ENCODE measurements at regions of chr5 and their contacts with region 1.

Region 1: DNA sequence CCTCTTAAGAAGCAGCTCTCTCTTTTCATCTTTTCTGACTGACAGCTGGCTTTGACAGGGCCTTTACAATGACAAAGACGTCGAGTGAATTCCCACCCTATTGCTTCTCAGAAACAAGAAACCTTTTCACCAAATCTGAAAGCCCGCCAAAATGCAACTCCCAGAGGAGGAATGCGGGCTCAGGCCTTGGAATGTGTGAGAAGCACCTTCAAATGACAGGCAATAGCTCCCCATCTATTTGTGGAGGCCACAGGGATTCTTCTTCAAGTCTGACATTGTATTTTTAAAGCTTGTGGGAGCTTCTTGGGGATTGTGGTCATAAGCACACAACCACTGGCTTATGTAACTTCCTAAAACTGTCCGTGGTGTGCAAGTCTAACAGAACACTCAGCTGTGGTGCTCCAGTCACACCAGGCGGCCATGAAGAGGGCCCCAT is 72.7 kb downstream of the DPYSL3 start:
- DNase-seq: no peak
- ATAC-seq: no peak
- H3K4me3 ChIP-seq: no peak overlapping the region
- H3K27ac ChIP-seq: no peak overlapping the region
- H3K4me1 ChIP-seq: peaks cover 3% of the 10 kb centered on the region
- H3K27me3 ChIP-seq: no peaks in the 10 kb centered on the region
- CTCF ChIP-seq: no peak

Region 2: DNA sequence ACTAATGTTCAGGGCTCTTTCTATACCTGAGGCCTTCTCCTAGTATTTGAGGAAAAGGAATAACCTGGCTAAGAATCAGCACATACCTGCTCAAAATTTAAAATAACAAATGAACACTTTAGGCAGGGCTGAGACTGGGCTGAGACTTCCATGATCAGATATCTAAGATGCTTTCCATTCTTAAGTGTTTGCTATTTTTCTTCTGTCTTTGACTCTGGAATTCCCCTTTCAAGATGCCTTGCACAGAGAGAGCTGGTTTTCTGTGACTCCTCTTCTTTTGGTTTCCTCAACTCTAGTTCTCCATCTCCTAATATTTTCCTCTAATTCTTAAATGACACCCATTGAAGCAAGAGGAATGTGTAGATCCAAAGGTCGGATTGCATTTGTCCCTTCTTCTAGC is 11.6 kb after region 1 on chr5:
- intact Hi-C with region 1: loop called in 1 of 2 experiments (anchors 1 kb)
- DNase-seq: no peak
- ATAC-seq: no peak
- H3K4me3 ChIP-seq: no peak overlapping the region
- H3K27ac ChIP-seq: no peak overlapping the region
- H3K4me1 ChIP-seq: no peaks in the 10 kb centered on the region
- H3K27me3 ChIP-seq: peaks cover 0 to 8% (median 0%) of the 10 kb centered on the region in 3 donors
- CTCF ChIP-seq: no peak